ENCODE measurements at regions of chr4 and their contacts with region 1.

Region 1: GRCh38 chr4:16196478-16197393 is 29.5 kb downstream of the TAPT1 start:
- DNase-seq: no peak
- H3K4me3 ChIP-seq: peak overlapping the region; percentile 45 to 59
- H3K27ac ChIP-seq: peak overlapping the region; percentile 78 to 79
- H3K4me1 ChIP-seq: peaks cover 0 to 45% of the 10 kb centered on the region in 2 donors
- H3K27me3 ChIP-seq: no peaks in the 10 kb centered on the region
- CTCF ChIP-seq: peak in 2 of 3 experiments; percentile 40 to 56

Region 2: DNA sequence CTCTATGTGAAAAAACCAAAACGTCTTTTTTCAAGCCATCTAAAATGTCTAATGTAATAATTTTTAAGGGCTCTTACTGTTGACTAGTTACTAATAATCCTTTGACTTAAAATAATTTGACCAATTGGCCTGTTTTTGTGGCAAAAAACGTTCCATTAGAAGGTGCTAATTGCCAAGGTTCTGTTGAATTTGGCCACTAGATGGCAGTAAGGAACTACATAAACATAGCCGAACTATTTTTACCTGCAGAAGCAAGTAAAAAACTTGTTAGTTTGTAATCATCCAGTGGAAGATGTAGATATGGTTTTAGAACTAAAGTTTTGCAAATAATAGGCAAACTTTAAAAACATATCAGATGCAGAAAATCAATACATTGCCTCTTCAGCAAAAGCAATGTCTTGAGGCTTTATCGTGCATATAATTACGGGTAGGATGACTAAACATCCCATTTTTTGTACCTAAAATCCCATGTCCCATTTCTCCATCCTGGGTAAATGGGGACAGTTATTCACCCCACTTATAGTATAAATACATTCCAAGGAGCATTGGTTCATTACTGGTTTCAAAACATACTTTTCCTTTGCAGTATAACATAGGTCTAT is 170.5 kb before region 1 on chr4:
- intact Hi-C with region 1: loop called (anchors 1 kb)
- DNase-seq: no peak
- H3K4me3 ChIP-seq: no peak overlapping the region
- H3K27ac ChIP-seq: no peak overlapping the region
- H3K4me1 ChIP-seq: peaks cover 0 to 15% of the 10 kb centered on the region in 2 donors
- H3K27me3 ChIP-seq: no peaks in the 10 kb centered on the region
- CTCF ChIP-seq: peak; percentile 72 to 85 (median 83)

Region 3: DNA sequence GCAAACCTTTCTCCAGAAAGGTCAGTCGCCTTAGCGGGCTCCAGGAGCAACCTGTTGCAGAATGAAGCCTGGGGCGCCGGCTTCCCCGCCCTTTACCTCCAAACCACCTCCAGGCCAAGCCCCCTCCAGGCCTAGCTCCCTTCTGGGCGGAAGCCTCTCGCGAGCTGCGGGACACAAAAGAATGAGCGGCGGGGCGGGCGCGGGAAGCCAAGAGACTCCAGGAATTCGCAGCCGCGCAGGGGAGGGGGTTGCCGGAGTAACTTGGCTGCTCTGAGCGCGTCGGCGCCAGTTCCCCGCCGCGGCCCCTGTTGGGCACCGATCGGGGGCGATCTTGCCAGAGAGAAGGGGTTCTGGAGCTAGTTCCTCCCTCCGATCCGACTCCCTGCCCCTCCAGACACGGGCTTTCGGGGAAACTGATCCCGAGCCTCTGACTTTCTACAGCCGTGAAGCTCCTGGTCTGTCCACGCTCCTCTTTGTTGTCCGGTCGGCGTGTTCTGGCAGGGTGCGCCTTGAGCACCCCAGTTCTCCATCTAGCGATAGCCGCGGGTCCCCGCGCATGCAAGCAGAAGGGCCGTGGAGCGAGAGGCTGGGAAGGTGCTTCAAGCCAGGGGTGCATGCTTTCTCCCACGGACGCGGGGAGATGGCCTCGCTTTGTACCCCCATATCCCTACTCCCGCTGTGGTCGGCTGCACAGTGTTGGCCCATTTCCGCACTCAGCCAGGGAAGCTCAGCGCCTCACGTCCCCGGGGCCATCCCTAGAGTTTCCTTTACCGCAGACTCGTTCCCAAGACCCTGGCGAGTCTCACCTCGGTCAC is 114.1 kb before region 1 on chr4:
- intact Hi-C with region 1: loop called (anchors 2 kb)
- DNase-seq: peak in 1 of 2 donors; percentile 77
- H3K4me3 ChIP-seq: peak overlapping the region; percentile 62 to 69
- H3K27ac ChIP-seq: peak overlapping the region in 1 of 2 donors; percentile 21
- H3K4me1 ChIP-seq: no peaks in the 10 kb centered on the region
- H3K27me3 ChIP-seq: peaks cover 4% of the 10 kb centered on the region
- CTCF ChIP-seq: no peak

Region 4: DNA sequence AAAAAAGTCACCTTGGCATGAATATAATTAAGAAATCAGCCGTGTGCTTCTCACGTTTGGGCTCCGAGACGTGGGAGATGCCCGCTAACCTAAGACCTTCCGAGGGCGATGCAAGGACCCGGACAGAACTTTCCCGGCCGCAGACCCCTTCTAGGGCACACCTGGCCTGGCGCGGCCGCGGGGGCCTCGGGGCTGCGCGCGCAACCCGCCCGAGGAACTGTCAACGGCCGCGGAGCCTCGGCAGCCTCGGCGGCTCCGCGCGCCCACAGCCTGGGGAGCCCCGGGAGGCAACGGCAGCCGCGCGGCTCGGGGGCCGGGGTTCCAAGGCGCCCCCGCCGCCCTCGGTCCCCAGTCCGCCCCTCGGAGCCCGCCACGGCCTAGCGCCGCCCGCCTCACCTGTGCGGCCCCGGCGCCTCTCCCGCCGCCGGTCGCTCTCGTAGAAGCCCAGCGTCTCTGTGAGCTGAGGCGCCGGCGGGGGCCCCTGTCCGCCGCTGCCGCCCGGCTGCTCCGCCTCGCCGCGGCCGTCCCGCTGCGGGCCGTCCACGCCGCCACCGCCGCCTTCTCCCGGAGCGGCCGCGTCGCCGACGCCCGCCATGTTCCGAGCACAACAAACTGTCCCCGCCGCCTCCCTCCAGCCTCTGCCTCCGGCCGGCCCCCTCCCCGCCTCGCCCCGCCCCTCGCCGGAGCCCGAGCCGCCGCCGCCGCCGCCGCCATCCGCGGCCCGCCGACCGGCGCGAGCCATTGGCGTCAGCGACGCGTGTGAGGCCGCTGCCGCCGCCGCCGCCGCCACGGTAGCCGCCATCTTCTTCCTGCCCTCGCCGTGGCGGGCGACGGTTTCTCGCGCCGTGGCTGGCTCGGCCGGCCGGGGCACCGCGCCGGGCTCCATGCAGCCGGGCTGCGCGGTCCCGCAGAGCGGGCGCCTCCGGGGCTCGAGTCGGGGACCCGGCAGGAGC is 29.4 kb after region 1 on chr4 and contains the start of gene TAPT1:
- intact Hi-C with region 1: loop called (anchors 2 kb)
- DNase-seq: peak in 1 of 2 donors; percentile 85
- H3K4me3 ChIP-seq: peak within 1 kb of the TSS; percentile 93 to 96
- H3K27ac ChIP-seq: peak within 1 kb of the TSS; percentile 98
- H3K4me1 ChIP-seq: peaks cover 4 to 37% of the 10 kb centered on the region in 2 donors
- H3K27me3 ChIP-seq: no peaks in the 10 kb centered on the region
- CTCF ChIP-seq: no peak
- total RNA-seq, gene TAPT1: 10.7 TPM

Region 5: DNA sequence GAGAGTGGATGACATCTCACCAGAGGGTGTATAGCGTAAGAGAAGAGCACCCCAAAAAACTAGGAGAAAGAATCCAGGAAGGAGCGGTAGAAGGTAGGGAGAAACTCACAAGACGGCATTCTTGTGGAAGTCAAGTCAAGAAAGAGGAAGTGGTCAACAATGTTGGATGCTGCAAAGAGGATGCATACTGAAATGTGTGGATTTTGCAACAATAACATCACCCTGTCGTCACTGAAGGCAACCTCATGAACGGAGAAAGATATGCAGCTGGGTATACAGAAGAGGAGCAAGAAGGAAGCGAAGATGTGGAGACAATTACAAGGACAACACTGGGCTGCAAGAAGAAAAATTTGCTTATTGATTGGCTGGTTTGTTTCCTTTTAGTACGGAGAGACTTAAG is 41.0 kb after region 1 on chr4:
- intact Hi-C with region 1: no loop called
- DNase-seq: no peak
- H3K4me3 ChIP-seq: no peak overlapping the region
- H3K27ac ChIP-seq: no peak overlapping the region
- H3K4me1 ChIP-seq: no peaks in the 10 kb centered on the region
- H3K27me3 ChIP-seq: no peaks in the 10 kb centered on the region
- CTCF ChIP-seq: no peak

Region 6: DNA sequence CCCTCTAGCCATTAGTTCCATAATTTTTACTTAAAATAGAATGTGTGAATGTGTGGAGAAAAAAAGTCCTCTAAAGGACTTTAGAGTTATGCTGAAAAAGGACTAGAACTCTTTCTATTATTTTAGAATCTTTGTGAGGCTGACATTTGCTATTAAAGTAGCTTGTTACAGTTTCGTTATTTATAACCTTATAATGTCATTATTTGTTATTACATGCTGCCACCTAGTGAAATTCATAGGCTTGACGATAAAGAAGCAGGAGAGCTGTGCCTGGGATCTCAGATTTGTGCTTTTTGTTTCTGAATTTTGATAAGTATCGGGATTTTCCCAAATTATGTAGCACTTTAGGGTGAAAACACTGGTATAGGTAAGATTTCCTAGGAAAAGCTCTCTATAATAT is 68.1 kb after region 1 on chr4:
- intact Hi-C with region 1: loop called (anchors 2 kb)
- DNase-seq: no peak
- H3K4me3 ChIP-seq: no peak overlapping the region
- H3K27ac ChIP-seq: no peak overlapping the region
- H3K4me1 ChIP-seq: peaks cover 3 to 10% of the 10 kb centered on the region in 2 donors
- H3K27me3 ChIP-seq: no peaks in the 10 kb centered on the region
- CTCF ChIP-seq: peak; percentile 38 to 72 (median 60)

Region 7: DNA sequence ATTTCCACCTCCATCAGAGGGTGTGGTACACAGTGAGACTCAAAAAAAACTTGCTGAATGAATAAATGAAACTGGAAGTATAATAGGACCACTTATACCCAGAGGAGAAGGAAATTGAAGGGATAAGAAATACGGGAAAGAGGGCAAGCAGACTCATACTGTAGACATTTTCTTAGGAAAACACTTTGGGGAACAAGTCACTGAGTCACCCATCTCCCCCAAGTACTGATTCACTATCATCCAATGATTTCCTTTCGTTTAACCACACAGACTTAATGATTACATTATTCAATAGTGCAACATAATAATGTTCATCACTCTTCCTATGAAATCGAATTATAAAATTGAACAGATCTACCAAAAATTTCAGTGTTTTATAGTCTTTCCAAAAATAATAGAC is 604.6 kb after region 1 on chr4:
- intact Hi-C with region 1: no loop called
- DNase-seq: no peak
- H3K4me3 ChIP-seq: no peak overlapping the region
- H3K27ac ChIP-seq: no peak overlapping the region
- H3K4me1 ChIP-seq: no peaks in the 10 kb centered on the region
- H3K27me3 ChIP-seq: no peaks in the 10 kb centered on the region
- CTCF ChIP-seq: no peak